OCI-LY7 (cell line): ENCODE measurements at regions of chr7 and their contacts with region 1.

Region 1: DNA sequence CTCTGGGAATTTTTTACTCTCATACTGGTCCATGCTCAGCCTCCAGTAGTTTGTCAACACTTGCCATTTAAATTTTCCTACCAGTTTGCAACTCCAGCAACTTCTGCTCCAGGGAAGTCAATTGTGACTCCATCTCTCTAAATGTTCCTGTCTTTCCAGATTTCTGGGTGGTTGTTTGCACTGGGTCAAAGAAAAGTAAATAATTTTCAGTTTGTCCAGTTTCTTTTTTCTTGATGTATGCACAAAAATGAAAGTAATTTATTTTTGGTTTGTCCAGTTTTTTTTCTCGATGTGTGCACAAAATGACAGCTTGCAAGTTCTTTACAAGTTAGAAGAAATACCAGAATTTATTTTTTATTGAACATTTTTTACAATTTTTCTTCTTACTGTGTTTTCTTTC is 1030.1 kb downstream of the DNAJB9 start:
- DNase-seq: no peak
- H3K4me3 ChIP-seq: no peak overlapping the region
- H3K27ac ChIP-seq: no peak overlapping the region
- H3K4me1 ChIP-seq: no peaks in the 10 kb centered on the region
- CTCF ChIP-seq: no peak

Region 2: GRCh38 chr7:109545686-109546085 is 54.1 kb before region 1 on chr7:
- CTCF ChIA-PET with region 1: no interaction called
- POLR2A ChIA-PET with region 1: interaction called, 10 read pairs
- intact Hi-C with region 1: no loop called
- DNase-seq: no peak
- H3K4me3 ChIP-seq: no peak overlapping the region
- H3K27ac ChIP-seq: no peak overlapping the region
- H3K4me1 ChIP-seq: no peaks in the 10 kb centered on the region
- CTCF ChIP-seq: no peak